Left ventricle myocardium superior (tissue), 1 donor: ENCODE measurements at regions of chr2 and their contacts with region 1.

Region 1: GRCh38 chr2:135052042-135052876 is at the start of gene RAB3GAP1:
- DNase-seq: peak; percentile 80
- ATAC-seq: peak; percentile 91
- total RNA-seq, gene RAB3GAP1: 53.2 TPM

Region 2: DNA sequence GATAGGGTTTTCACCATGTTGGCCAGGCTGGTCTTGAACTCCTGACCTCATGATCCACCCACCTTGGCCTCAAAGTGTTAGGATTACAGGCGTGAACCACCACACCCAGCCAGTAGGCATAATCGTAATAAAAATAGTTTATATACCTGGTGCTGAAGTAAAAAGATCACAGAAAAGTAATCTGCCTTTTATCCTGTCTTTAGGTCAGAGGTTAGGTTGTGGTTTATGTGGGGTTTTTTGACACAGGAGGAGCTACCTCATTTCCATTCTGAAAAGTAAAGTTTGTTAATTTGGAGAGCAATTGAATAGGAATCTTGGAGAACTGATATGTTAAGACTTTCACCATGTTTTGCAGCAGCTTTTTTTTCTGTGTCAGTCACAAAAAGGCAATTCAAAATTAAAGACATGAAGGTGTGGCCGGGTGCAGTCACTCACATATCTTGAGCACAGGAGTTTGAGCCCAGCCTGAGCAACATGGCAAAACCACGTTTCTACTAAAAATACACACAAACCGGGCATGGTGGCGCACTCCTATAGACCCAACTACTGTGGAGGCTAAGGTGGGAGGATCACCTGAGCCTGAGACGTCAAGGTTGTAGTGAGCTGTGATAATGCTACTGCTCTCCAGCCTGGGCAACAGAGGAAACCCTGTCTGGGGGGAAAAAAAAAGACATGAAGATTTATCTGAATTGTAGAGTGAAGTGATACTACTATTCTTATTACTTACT is 102.1 kb before region 1 on chr2:
- intact Hi-C with region 1: loop called (anchors 5 kb)
- DNase-seq: no peak
- ATAC-seq: no peak